AG04450 (cell line): ENCODE measurements at regions of chr7 and their contacts with region 1.

Region 1: GRCh38 chr7:16071246-16071857 is 350.0 kb downstream of the CRPPA start:
- DNase-seq: peak; percentile 41
- H3K4me3 ChIP-seq: no peak overlapping the region
- H3K27ac ChIP-seq: no peak overlapping the region
- H3K27me3 ChIP-seq: no peaks in the 10 kb centered on the region
- CTCF ChIP-seq: peak; percentile 76

Region 2: DNA sequence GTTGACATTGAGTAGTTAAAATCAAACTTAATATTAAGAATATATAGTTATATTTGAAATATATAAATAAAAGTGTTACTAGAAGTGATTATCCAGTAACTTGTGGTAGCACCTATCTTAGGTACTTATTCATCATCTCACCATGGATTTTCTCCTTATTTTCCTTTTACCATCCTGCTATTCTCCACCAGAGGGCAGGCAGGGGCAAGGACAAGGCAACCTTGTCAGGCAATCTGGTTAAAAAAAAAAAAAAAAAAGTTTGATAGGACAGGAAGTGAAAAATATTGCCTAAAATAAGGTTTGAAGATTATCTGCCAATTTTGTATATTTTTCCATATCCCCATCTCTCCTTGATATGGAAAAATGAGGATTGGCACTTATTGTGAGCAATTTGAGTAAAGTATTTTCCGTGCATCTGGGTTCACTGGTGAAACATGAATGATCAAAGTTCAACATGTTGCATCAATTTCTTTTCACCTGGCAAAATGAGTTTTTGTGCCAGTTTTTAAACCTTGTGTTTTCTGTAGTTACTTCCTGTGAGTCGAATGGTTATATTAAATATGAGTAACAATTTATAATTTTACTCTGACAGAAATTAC is 766.3 kb before region 1 on chr7:
- CTCF ChIA-PET with region 1: interaction called, 18 read pairs
- POLR2A ChIA-PET with region 1: no interaction called
- DNase-seq: peak; percentile 15
- H3K4me3 ChIP-seq: no peak overlapping the region
- H3K27ac ChIP-seq: no peak overlapping the region
- H3K27me3 ChIP-seq: no peaks in the 10 kb centered on the region
- CTCF ChIP-seq: peak; percentile 87

Region 3: DNA sequence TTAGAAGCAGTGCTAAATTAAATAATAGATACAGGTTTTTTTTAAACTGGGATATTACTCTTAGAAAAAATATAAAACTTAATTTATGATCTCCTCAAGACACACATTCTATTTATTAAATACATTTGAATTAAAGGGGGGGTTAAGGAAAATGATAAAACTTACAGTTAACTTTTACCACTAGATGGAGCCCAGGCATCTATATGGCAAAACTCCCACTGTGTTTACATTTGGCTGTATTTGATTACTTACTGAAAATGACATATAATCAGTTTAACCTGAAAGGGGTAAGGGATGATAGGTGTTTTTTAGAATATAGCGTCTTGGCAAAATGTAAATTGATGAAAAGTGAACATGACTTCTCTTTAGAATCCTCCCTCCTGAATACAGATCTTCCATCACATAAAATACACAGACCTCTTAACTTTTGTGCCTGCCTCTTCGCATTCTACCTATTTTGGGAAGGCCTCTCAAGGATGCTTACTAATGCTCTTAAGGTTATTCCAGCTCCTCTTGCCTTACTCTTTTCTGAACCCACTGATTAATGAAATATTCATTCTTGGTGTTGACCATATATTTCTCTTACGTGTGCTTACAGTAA is 745.2 kb before region 1 on chr7:
- CTCF ChIA-PET with region 1: interaction called, 14 read pairs
- POLR2A ChIA-PET with region 1: no interaction called
- DNase-seq: peak; percentile 3
- H3K4me3 ChIP-seq: no peak overlapping the region
- H3K27ac ChIP-seq: no peak overlapping the region
- H3K27me3 ChIP-seq: no peaks in the 10 kb centered on the region
- CTCF ChIP-seq: peak; percentile 70

Region 4: DNA sequence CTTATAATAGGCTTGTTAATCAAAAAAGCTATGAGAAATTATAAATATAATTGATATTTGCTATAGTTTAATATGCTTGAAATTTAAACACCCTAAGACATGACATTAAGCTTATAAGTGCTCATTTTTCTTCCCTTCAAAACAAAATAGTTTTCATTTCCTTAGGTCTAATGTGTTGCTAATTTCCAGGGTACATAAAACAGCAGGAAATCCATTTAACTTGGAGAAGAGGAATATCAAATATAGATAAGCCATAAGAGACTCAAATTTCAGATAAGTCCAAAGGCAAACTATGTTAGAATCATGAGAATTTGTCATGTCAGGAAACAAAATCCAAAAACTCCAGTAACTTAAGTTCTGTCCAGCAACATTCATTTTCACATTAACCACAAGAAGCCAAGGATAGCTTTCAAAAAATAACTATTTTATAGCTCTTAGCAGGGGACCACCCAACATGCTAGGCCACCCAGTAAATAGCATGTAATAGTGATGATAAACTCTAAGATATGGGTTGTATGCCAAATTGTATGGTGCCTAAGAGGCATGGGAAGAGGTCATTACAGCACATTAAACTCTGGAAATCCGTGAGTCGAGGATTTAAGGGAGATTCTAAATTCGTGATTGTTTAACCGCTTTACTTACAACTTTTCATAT is 51.9 kb after region 1 on chr7:
- CTCF ChIA-PET with region 1: no interaction called
- POLR2A ChIA-PET with region 1: no interaction called
- DNase-seq: no peak
- H3K4me3 ChIP-seq: no peak overlapping the region
- H3K27ac ChIP-seq: no peak overlapping the region
- H3K27me3 ChIP-seq: no peaks in the 10 kb centered on the region
- CTCF ChIP-seq: no peak